GM12878 (cell line): ENCODE measurements at regions of chr16 and their contacts with region 1.

Region 1: GRCh38 chr16:51201604-51202003 is 50.5 kb upstream of the SALL1 start:
- DNase-seq: no peak
- ATAC-seq: no peak
- H3K4me3 ChIP-seq: no peak overlapping the region
- H3K27ac ChIP-seq: no peak overlapping the region
- H3K4me1 ChIP-seq: no peaks in the 10 kb centered on the region
- H3K27me3 ChIP-seq: no peaks in the 10 kb centered on the region
- CTCF ChIP-seq: no peak
- EP300 ChIP-seq: no peak
- POLR2A ChIP-seq: no peak
- RAD21 ChIP-seq: no peak

Region 2: DNA sequence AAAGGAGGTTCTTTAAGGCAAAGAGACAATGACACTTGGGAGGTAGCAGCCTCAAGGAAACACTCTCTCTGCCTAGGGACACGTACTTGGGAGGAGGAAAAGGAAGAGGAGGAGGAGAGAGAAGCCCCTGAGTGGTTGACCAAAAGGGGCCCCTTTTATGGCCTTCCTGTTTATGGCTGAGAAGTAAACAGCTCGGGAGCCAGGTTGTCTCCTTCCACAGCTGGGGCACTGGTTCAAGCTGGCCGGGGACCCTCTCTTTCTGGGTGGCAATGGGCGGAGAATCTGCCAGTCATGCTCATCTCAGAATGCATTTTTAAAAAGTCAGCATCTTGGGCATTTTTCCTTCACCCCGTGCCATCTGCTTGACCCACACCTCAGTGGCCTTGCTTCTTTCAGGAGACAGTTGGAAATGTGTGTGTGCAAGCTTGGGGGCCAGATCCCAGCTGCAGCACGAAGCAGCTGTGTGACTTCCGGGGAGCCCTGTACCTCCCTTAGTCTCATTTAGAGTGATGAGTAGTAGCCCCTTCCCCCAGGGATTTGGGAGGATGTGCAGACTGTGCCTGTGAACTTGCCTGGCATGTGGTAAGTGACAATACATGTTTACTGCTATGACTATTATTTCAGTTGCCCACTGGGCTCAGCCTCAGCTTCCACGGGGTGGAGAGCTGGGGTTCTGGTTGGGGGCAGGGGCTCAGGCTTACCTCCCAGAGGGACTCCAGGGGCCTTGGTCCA is 16.7 kb before region 1 on chr16:
- CTCF ChIA-PET with region 1: no interaction called
- POLR2A ChIA-PET with region 1: no interaction called
- RAD21 ChIA-PET with region 1: no interaction called
- SMC1A ChIA-PET with region 1: no interaction called
- in situ Hi-C with region 1: no loop called
- intact Hi-C with region 1: no loop called
- DNase-seq: no peak
- ATAC-seq: no peak; the same call in 2 of the 3 replicates
- H3K4me3 ChIP-seq: no peak overlapping the region
- H3K27ac ChIP-seq: no peak overlapping the region
- H3K4me1 ChIP-seq: no peaks in the 10 kb centered on the region
- H3K27me3 ChIP-seq: no peaks in the 10 kb centered on the region
- CTCF ChIP-seq: no peak
- EP300 ChIP-seq: no peak
- POLR2A ChIP-seq: no peak
- RAD21 ChIP-seq: no peak

Region 3: DNA sequence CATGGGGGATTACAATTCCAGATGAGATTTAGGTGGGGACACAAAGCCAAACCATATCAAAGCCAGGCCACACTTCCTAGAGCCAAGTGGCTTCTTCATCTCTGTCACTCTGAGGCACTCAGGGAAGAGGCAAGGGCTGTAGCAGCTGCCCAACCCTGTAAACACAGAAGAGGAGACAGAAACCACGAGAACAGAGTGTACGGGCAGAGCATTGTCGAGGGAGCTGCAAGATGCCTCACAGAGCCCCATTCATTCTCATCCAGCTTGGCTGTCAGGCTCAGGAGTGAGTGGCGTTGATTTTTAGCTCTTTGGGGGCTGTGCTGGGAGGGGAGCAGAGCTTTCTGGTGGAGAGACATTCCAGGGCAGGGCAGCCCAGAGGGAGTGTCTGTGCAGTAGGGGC is 66.6 kb after region 1 on chr16:
- CTCF ChIA-PET with region 1: no interaction called
- POLR2A ChIA-PET with region 1: no interaction called
- RAD21 ChIA-PET with region 1: no interaction called
- SMC1A ChIA-PET with region 1: no interaction called
- in situ Hi-C with region 1: no loop called
- intact Hi-C with region 1: loop called (anchors 10 kb)
- DNase-seq: no peak
- ATAC-seq: no peak
- H3K4me3 ChIP-seq: no peak overlapping the region
- H3K27ac ChIP-seq: no peak overlapping the region
- H3K4me1 ChIP-seq: no peaks in the 10 kb centered on the region
- H3K27me3 ChIP-seq: no peaks in the 10 kb centered on the region
- CTCF ChIP-seq: no peak
- EP300 ChIP-seq: no peak
- POLR2A ChIP-seq: no peak
- RAD21 ChIP-seq: no peak